Right cardiac atrium (tissue), 5 donors: ENCODE measurements at regions of chr9 and their contacts with region 1.

Region 1: DNA sequence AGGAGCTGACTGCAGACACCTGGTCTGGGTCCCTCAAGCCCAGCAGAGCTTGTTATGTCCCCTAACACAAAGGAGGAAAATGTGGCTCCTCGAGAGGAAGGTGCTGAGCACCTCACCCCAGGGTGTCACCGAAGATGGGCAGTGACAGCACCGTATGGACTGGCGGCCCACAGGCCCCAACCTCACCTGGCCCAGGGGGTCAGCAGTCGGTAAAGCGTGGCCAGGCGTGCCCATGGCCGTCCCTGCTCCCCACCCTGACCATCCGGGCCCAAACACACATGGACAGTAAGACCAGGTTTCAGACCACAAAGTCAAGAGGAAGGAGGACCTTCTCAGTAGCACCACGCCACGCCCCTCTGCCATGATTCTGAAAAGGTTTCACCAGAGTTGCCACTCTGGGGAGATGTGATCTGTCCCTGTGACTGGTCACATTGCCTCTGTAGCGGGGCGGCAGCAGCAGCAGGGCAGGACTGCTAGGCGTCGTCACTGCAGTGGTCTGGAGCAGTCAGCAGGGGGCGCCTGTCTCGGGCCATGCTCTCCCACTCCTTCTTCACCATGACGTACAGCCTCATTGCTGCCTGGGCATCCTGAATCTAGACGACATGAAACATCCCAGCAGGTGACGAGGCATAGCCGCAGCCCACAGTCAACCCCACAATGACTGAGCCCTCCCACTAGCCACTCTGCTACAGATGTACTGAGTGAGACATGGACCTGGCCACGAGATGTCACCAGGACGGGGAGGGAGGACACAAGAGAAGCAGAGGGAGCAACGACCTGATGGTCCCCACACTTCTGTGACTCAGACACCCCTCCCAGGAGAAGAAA is 11.1 kb downstream of the REXO4 start:
- DNase-seq: peak; percentile 71 to 90 (median 87)
- ATAC-seq: peak; percentile 71 to 72
- H3K4me3 ChIP-seq: no peak overlapping the region
- H3K27ac ChIP-seq: no peak overlapping the region
- H3K4me1 ChIP-seq: no peaks in the 10 kb centered on the region
- H3K27me3 ChIP-seq: no peaks in the 10 kb centered on the region

Region 2: DNA sequence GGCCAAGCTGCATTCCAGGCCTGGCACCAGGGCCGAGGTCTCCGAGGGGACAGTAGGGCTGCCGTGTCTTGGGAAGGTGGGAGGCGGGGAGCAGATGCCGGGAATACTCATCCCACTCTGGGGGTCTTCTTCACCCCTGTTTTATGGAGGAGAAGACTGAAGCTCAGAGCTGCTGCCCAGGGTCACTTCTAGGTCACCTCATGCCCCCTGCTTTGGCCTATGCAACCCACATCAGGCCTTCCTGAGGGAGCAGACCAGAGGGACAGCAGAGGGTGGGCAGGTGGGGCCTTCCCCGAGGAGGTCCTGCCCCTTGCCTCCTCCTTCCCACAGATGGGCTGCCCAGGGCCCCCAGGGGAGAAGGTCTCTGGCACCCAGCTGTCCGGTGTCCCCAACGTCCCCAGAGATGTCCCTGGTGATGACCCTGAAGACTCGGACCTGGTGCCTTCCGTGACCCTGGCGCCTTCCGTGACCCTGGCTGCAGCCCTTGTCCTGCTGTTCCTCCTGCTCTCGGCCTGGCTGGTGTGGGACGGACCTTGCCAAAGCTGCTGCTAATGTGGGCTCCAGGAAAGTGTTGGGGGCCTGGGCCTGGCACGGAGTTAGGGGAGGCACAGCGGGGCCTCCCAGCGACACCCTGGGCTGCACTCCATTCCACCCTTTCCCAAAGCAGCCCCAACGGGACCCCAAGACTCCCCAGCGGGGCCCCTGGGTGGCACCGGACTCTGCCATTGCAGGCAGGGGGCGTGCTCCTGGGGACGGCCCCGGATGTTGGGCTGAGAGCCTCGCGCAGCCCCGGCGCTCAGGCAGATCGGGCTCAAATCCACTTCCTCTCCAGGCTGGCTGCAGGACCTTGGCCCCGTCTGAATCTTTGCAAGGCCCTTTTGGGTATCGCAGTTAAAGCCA is 78.9 kb after region 1 on chr9:
- intact Hi-C with region 1: loop called (anchors 2 to 5 kb)
- DNase-seq: peak; percentile 13 to 54 (median 53)
- ATAC-seq: peak; percentile 4
- H3K4me3 ChIP-seq: no peak overlapping the region
- H3K27ac ChIP-seq: no peak overlapping the region
- H3K4me1 ChIP-seq: no peaks in the 10 kb centered on the region
- H3K27me3 ChIP-seq: no peaks in the 10 kb centered on the region